GM10248 (cell line): ENCODE measurements at regions of chr19 and their contacts with region 1.

Region 1: DNA sequence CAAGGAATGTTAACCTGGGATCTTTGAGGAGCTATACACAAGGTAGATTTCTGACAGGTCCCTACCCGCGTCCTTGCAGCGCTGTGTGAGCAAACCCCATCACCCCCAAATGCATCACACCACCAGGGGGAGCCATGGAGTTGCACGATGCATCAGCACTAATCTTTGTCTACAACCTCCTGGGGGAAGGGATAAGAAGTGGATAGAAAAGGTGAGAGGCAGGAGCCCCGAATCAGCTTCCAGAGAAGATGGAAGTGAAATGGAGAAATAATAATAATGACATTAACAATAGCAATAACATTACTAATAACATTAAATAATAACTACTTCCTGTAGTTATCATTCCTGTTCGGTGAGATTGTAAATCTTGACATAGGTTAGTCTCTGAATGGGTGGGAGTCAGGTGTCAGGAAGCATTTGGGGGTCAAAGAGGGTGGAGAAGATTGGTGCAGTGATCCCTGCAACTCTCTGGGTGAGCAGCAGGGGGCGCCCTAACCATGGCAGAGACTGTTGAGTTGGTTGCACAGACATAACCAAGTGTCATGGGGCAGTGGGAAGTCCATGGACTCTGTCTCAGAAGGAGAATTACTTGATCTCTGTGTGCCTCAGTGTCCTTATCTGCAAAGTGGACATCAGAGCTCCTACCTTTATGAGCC is 16.5 kb downstream of the SIGLEC7 start:
- DNase-seq: peak; percentile 61
- CTCF ChIP-seq: peak; percentile 85

Region 2: GRCh38 chr19:51009061-51009891 is 149.3 kb before region 1 on chr19:
- CTCF ChIA-PET with region 1: no interaction called
- POLR2A ChIA-PET with region 1: no interaction called
- DNase-seq: no peak
- CTCF ChIP-seq: no peak

Region 3: DNA sequence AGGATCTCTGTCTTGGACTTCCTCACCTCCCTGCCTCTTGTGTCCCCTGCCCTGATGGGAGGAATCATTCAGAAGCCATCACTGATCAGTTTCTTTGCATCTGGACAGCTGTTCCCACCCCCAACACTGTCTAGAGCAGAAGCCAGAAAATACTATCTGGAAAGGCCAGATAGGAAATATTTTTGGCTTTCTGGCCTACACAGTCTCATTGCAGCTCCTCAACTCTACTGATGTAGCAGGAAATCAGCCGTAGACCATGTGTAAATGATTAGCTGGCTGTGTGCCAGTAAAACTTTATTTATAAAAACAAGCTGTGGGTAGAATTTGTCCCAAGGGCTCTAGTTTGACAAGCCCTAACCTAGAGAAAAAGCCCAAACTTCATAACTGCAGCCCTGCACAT is 10.9 kb before region 1 on chr19:
- CTCF ChIA-PET with region 1: interaction called, 49 read pairs
- POLR2A ChIA-PET with region 1: no interaction called
- DNase-seq: no peak
- CTCF ChIP-seq: no peak

Region 4: DNA sequence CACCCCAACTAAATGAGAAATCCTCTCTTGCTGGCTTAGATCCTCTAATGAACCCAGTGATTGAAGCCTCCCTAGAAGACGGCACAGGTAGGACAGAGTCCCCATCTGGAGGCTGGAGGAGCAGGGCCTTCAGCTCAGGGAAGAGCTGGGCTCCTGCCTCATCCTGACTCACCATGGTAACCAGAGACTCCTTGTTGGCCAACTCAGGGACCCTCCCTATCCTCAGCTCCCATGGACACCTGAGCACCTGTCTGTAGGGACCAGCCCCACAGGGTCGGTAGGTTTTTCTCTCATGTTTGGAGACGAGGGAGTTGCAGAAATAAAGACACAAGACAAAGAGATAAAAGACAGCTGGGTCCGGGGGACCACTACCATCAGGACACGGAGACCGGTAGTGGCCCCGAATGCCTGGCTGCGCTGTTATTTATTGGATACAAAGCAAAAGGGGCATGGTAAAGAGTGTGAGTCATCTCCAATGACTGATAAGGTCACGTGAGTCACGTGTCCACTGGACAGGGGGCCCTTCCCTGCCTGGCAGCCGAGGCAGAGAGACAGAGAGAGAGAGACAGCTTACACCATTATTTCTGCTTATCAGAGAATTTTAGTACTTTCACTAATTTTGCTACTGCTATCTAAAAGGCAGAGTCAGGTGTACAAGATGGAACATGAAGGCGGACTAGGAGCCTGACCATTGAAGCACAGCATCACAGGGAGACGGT is 10.1 kb after region 1 on chr19:
- CTCF ChIA-PET with region 1: interaction called, 35 read pairs
- POLR2A ChIA-PET with region 1: no interaction called
- DNase-seq: no peak
- CTCF ChIP-seq: no peak

Region 5: GRCh38 chr19:51259348-51260245 is 101.0 kb after region 1 on chr19:
- CTCF ChIA-PET with region 1: interaction called, 63 read pairs
- POLR2A ChIA-PET with region 1: no interaction called
- DNase-seq: peak; percentile 57
- CTCF ChIP-seq: peak; percentile 78